Activated T-helper 1 cell treated with anti-CD3 and anti-CD28 coated beads, Interleukin-12 subunit alpha, Interleukin-12 subunit beta, Interleukin-2, Interleukin-4 antibody, amounts not matched to agents 30 ng/mL and 10 ng/mL and 1 ng/mL, durations not matched to agents 14 hours and 24 hours and 36 hours (primary cell): ENCODE measurements at regions of chr18 and their contacts with region 1.

Region 1: GRCh38 chr18:63320046-63320689 is 599 bp upstream of the BCL2 start:
- DNase-seq: peak; percentile 83
- H3K4me3 Mint-ChIP-seq: peak overlapping the region; percentile 90
- H3K27ac Mint-ChIP-seq: peak overlapping the region; percentile 94
- H3K4me1 Mint-ChIP-seq: peaks cover 42% of the 10 kb centered on the region
- H3K27me3 Mint-ChIP-seq: no peaks in the 10 kb centered on the region

Region 2: DNA sequence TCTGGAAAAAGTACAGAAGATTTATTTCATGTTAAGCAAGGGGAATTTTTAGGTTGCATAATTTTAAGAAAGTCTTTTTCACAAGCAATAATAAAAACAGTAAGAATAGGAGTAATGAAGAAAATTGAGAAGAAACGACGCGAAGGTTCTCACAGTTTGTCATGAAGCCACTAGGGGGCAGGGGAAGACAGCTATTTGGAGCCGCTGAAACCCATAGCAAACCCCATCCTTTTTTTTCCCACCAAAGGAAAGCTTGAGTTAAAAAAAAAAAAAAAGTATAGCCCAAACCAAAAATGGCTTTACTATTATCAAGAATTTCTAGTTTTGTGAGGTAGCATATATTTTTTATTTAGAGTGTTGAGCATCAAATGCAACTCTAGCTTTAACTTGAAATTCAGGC is 303.9 kb before region 1 on chr18:
- intact Hi-C with region 1: loop called (anchors 1 kb)
- DNase-seq: no peak
- H3K4me3 Mint-ChIP-seq: no peak overlapping the region
- H3K27ac Mint-ChIP-seq: no peak overlapping the region
- H3K4me1 Mint-ChIP-seq: no peaks in the 10 kb centered on the region
- H3K27me3 Mint-ChIP-seq: peaks cover 65% of the 10 kb centered on the region

Region 3: DNA sequence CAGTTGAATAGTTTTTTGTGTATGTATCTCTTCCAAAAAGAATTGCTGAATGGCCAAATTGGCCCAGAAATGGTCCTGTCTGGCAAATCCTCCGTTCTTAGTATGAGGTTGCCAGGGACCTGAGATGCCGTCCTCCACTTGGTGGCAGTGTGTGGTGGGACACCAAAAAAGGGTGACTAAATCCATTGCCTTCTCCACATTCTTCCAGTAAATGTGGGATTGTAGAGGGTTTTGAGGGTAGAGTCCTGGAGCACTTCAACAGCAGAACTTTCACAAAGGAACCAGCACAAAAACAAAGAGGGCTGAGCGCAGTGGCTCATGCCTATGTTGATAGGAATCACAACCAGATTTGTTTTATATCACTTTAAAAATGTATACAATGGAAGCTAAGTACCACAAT is 200.5 kb before region 1 on chr18:
- intact Hi-C with region 1: loop called (anchors 1 kb)
- DNase-seq: no peak
- H3K4me3 Mint-ChIP-seq: no peak overlapping the region
- H3K27ac Mint-ChIP-seq: no peak overlapping the region
- H3K4me1 Mint-ChIP-seq: peaks cover 13% of the 10 kb centered on the region
- H3K27me3 Mint-ChIP-seq: peaks cover 12% of the 10 kb centered on the region

Region 4: GRCh38 chr18:63155169-63155852 is 164.9 kb before region 1 on chr18:
- intact Hi-C with region 1: loop called (anchors 1 kb)
- DNase-seq: peak; percentile 72
- H3K4me3 Mint-ChIP-seq: peak overlapping the region; percentile 79
- H3K27ac Mint-ChIP-seq: peak overlapping the region; percentile 88
- H3K4me1 Mint-ChIP-seq: peaks cover 99% of the 10 kb centered on the region
- H3K27me3 Mint-ChIP-seq: no peaks in the 10 kb centered on the region

Region 5: DNA sequence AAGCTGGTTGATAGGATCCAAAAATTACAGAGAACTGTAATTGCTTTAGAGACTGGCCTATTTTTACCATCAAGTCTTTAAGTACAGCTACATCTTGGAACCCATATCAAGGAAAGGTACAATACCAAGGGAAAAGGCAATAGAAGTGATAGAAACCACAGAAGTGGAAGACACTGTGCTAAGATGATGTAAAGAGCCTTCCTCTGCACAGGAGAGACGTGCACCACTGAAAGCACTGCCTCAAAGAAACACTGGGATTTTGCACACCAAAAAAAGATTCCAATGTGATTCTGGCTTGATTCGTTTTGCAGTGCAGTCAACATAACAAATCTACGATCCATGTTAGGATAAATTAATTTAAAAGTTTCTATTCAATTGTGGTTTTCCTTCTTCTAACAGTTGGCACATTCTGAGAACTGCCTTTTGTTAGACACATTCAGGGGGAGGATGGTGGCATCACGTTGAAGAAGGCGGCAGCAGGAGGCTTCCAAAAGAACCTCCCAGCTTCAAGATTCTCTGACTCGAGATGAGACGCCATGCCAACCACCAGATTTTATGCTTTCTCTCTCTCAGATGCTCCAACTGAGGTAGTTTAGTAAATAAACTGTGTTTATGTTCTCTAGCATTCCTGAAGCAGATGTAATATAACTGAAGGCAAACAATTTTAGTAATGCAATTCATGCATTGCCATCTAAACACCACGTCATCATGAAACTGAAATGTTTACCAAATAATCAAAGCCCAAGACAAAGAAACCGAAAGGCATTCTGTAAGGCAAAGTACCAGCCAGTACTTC is 103.5 kb before region 1 on chr18:
- intact Hi-C with region 1: loop called (anchors 1 kb)
- DNase-seq: no peak
- H3K4me3 Mint-ChIP-seq: peak overlapping the region; percentile 67
- H3K27ac Mint-ChIP-seq: peak overlapping the region; percentile 89
- H3K4me1 Mint-ChIP-seq: peaks cover 94% of the 10 kb centered on the region
- H3K27me3 Mint-ChIP-seq: no peaks in the 10 kb centered on the region

Region 6: DNA sequence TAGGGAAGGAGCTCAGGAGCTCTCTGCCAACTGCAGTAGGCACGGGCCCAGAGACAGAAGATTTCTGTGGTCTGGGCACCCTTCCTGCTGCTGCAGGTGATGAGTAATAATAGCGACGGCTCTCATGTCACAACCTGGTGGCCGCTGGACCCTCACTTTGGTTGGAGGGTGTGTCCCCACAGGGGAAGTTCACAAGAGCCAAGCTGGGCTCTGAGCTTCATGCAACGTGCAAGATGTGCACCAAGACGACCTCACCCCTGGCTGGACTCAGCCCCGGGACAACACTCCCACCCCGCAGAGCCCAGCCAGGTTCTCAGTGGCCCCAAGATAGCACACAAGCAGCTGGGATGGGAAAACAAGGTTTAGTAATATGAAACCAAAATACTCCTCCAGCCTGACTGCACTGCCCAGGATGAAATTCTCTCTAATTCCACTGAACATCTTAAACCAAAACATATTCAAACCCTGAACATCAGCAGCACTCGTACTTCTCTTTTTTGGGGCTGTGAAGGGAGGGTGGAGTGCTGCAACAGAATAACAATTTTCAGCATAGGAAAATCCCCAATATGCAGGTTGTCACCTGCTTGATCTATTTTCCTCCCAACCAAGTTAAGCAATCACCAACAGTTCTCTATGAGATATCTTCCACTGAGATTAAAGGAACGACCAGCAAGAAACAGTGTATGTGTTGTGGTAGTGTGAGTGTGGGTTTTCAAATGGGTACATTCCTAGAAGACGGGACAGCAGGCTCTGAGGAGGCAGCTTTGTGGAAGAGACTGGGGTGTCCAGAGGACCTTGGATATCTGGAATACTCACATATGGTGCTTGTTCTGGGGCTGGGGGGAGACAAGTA is 27.1 kb before region 1 on chr18:
- intact Hi-C with region 1: loop called (anchors 1 kb)
- DNase-seq: no peak
- H3K4me3 Mint-ChIP-seq: peak overlapping the region; percentile 46
- H3K27ac Mint-ChIP-seq: peak overlapping the region; percentile 86
- H3K4me1 Mint-ChIP-seq: peaks cover 65% of the 10 kb centered on the region
- H3K27me3 Mint-ChIP-seq: no peaks in the 10 kb centered on the region

Region 7: DNA sequence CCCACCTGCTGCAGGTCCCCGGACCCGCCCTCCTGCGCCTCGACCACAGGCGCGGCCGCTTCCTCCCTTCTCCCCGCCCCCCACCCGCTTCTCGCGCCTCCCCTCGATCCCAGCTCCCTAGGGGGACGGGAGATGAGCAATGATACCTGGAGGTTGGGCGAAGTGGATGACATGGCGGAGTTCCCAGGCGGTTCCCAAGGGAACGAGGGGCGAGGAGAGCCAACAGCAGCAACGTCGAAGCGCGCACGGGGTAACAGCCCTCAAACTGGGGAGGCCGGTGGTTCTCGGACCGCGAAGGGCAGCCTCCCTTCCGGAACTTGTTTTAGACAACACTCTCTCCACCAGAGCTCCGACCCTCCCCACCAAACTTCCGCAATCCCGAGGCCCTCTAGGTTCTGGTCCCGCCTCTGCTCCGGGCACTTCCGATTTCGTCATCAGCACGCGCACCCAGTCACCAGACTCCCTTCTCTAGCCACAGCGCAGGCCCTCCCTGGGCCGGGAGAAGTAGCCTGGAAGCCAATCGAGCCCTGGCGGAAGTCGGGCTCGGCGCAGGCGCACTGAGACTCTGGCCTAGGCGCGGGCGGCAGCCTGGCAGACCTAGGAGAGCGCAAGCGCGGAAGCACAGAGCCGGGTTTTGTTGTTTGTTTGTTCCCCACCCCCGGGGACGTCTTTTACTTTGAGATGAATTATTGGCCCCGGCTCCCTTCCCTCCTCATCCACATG is 102.1 kb after region 1 on chr18 and contains the start of gene VPS4B:
- intact Hi-C with region 1: loop called (anchors 1 kb)
- DNase-seq: peak; percentile 100
- H3K4me3 Mint-ChIP-seq: peak within 1 kb of the TSS; percentile 91
- H3K27ac Mint-ChIP-seq: peak within 1 kb of the TSS; percentile 92
- H3K4me1 Mint-ChIP-seq: peaks cover 18% of the 10 kb centered on the region
- H3K27me3 Mint-ChIP-seq: no peaks in the 10 kb centered on the region
- total RNA-seq, gene VPS4B: 58.6 and 60.7 TPM in 2 replicates